Calu3 (cell line): ENCODE measurements at regions of chr1 and their contacts with region 1.

Region 1: GRCh38 chr1:167442124-167442848 is 76.0 kb downstream of the CD247 start:
- DNase-seq: peak; percentile 97
- H3K4me3 Mint-ChIP-seq: no peak overlapping the region
- H3K27ac Mint-ChIP-seq: peak overlapping the region; percentile 18
- H3K4me1 Mint-ChIP-seq: peaks cover 19% of the 10 kb centered on the region
- H3K27me3 Mint-ChIP-seq: no peaks in the 10 kb centered on the region
- CTCF ChIP-seq: peak; percentile 85

Region 2: GRCh38 chr1:167121375-167122120 is 320.7 kb before region 1 on chr1:
- CTCF ChIA-PET with region 1: no interaction called
- intact Hi-C with region 1: loop called (anchors 10 kb)
- DNase-seq: peak; percentile 84
- H3K4me3 Mint-ChIP-seq: peak overlapping the region; percentile 78
- H3K27ac Mint-ChIP-seq: peak overlapping the region; percentile 17
- H3K4me1 Mint-ChIP-seq: peaks cover 24% of the 10 kb centered on the region
- H3K27me3 Mint-ChIP-seq: peaks cover 15% of the 10 kb centered on the region
- CTCF ChIP-seq: no peak

Region 3: DNA sequence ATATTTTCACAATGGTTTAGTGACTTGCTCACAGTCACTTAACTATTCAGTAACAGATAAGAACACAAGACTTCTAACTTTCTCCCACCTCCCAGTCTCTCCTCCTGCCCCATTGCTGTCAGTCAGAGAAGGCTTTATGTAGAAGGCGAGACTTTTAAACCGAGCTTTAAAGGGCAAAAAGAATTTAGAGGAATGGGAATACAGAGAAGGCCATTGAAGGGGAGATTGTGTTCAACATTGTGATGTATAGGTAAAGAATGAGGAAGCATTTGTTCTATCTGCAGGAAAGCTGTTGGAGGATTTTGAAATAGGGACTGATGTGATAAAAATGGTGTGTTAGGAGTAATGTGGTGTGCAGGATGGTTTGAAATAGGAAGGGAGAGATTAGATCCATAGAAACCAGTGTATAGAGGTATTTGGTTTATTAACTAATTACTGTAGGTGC is 214.3 kb before region 1 on chr1:
- CTCF ChIA-PET with region 1: no interaction called
- intact Hi-C with region 1: loop called (anchors 5 kb)
- DNase-seq: peak; percentile 37
- H3K4me3 Mint-ChIP-seq: peak overlapping the region; percentile 44
- H3K27ac Mint-ChIP-seq: peak overlapping the region; percentile 95
- H3K4me1 Mint-ChIP-seq: peaks cover 42% of the 10 kb centered on the region
- H3K27me3 Mint-ChIP-seq: no peaks in the 10 kb centered on the region
- CTCF ChIP-seq: no peak

Region 4: DNA sequence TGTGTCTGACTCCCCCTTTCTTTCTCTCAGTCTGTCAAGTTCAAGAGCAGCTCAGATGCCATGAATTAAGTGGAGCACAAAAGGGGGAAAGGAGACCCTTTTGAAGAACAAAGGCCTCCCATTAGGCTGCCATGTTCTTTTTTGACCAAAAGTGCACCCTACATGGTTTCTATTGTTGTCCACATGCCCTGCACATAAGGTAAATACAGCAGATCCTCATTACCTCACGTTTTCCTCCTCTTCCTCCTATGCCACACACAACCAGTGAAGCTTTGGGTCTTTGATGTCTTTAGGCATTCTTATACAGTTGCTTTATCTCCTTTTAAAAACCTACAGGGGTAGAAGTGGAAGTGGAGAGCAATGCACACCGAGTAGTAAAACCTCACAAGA is 173.9 kb before region 1 on chr1:
- CTCF ChIA-PET with region 1: interaction called, 4 read pairs
- intact Hi-C with region 1: loop called (anchors 1 kb)
- DNase-seq: no peak
- H3K4me3 Mint-ChIP-seq: no peak overlapping the region
- H3K27ac Mint-ChIP-seq: no peak overlapping the region
- H3K4me1 Mint-ChIP-seq: peaks cover 6% of the 10 kb centered on the region
- H3K27me3 Mint-ChIP-seq: no peaks in the 10 kb centered on the region
- CTCF ChIP-seq: no peak

Region 5: GRCh38 chr1:167401260-167401873 is 40.9 kb before region 1 on chr1:
- CTCF ChIA-PET with region 1: interaction called, 4 read pairs
- intact Hi-C with region 1: loop called (anchors 1 kb)
- DNase-seq: peak; percentile 73
- H3K4me3 Mint-ChIP-seq: no peak overlapping the region
- H3K27ac Mint-ChIP-seq: no peak overlapping the region
- H3K4me1 Mint-ChIP-seq: peaks cover 7% of the 10 kb centered on the region
- H3K27me3 Mint-ChIP-seq: no peaks in the 10 kb centered on the region
- CTCF ChIP-seq: peak; percentile 49